ENCODE measurements at regions of chr10 and their contacts with region 1.

Region 1: GRCh38 chr10:17257466-17258321 is 29.7 kb downstream of the VIM start:
- DNase-seq: peak in 2 of 5 donors; percentile 49 to 50
- ATAC-seq: peak; percentile 73 to 87 (median 84)
- H3K4me3 ChIP-seq: peak overlapping the region in 5 of 12 donors; percentile 16 to 42 (median 24)
- H3K27ac ChIP-seq: peak overlapping the region in 1 of 12 donors; percentile 30
- H3K4me1 ChIP-seq: peaks cover 0 to 9% (median 0%) of the 10 kb centered on the region in 12 donors
- H3K27me3 ChIP-seq: no peaks in the 10 kb centered on the region
- CTCF ChIP-seq: peak; percentile 77 to 91 (median 85)
- POLR2A ChIP-seq: no peak

Region 2: GRCh38 chr10:16828114-16828568 is 429.6 kb before region 1 on chr10:
- intact Hi-C with region 1: loop called in 4 of 10 experiments (anchors 1 to 5 kb)
- DNase-seq: peak in 4 of 5 donors; percentile 46 to 55 (median 53)
- ATAC-seq: peak; percentile 74 to 82 (median 80)
- H3K4me3 ChIP-seq: peak overlapping the region in 5 of 12 donors; percentile 1 to 38 (median 17)
- H3K27ac ChIP-seq: peak overlapping the region in 10 of 12 donors; percentile 25 to 75 (median 49)
- H3K4me1 ChIP-seq: peaks cover 0 to 29% (median 13%) of the 10 kb centered on the region in 12 donors
- H3K27me3 ChIP-seq: no peaks in the 10 kb centered on the region
- CTCF ChIP-seq: peak; percentile 51 to 74 (median 64)
- POLR2A ChIP-seq: no peak

Region 3: DNA sequence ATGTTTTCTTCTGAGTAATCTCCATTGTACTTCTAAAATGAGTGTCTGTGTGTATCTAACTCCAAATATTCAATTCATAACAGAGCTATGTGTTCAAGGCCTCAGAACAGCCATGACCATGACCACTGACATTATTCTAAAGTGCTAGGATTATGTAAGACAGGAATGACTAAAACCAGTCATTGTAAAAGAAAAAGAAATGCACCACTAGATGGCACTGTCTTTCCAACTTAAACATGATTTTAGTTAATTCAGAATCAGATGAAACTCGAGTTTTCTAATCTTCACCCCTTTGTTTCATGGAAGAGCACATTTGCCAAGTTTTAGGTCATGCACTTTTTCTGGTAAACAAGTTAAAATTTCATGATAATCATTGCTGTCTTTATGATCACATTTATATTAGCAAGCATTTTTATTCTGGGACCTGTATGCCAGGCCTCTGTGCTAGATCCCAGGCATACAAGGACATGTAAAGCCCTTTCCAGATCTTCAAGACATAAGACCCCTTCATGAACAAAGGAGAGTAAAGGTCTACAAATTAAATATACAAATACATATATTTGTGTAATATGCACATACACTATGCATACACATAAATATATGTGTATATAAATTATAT is 414.3 kb before region 1 on chr10:
- intact Hi-C with region 1: loop called (anchors 1 to 5 kb)
- DNase-seq: peak in 1 of 5 donors; percentile 19
- ATAC-seq: peak; percentile 45 to 61 (median 52)
- H3K4me3 ChIP-seq: no peak overlapping the region
- H3K27ac ChIP-seq: no peak overlapping the region
- H3K4me1 ChIP-seq: peaks cover 0 to 12% (median 0%) of the 10 kb centered on the region in 12 donors
- H3K27me3 ChIP-seq: no peaks in the 10 kb centered on the region
- CTCF ChIP-seq: peak; percentile 58 to 79 (median 68)
- POLR2A ChIP-seq: no peak

Region 4: DNA sequence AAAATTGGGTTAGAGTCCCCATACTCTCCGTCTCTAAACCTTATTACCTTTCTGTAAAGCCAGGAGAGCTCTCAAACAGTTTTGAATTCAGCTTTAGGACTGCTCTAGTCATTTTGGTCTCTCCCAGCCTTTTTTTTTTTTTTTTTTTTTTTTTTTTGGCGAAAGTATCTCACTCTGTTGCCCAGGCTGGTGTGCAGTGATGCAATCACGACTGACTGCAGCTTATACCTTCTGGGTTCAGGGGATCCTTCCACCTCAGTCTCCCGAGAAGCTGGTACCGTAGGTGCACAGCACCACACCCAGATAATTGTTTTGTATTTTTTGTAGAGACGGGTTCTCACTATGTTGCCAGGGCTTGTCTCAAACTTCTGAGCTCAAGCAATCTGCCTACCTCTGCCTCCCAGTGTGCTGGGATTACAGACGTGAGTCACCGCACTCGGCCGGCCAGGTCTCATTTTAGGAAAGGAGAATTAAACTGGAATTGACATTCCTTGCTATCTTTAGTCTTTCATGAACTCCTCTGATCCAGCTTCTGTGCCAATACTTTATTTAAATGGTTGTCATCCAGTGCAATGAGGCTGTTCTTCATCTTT is 409.0 kb before region 1 on chr10:
- intact Hi-C with region 1: loop called in 9 of 10 experiments (anchors 1 to 5 kb)
- DNase-seq: no peak
- ATAC-seq: no peak
- H3K4me3 ChIP-seq: no peak overlapping the region
- H3K27ac ChIP-seq: no peak overlapping the region
- H3K4me1 ChIP-seq: peaks cover 0 to 12% (median 0%) of the 10 kb centered on the region in 12 donors
- H3K27me3 ChIP-seq: no peaks in the 10 kb centered on the region
- CTCF ChIP-seq: no peak
- POLR2A ChIP-seq: no peak

Region 5: DNA sequence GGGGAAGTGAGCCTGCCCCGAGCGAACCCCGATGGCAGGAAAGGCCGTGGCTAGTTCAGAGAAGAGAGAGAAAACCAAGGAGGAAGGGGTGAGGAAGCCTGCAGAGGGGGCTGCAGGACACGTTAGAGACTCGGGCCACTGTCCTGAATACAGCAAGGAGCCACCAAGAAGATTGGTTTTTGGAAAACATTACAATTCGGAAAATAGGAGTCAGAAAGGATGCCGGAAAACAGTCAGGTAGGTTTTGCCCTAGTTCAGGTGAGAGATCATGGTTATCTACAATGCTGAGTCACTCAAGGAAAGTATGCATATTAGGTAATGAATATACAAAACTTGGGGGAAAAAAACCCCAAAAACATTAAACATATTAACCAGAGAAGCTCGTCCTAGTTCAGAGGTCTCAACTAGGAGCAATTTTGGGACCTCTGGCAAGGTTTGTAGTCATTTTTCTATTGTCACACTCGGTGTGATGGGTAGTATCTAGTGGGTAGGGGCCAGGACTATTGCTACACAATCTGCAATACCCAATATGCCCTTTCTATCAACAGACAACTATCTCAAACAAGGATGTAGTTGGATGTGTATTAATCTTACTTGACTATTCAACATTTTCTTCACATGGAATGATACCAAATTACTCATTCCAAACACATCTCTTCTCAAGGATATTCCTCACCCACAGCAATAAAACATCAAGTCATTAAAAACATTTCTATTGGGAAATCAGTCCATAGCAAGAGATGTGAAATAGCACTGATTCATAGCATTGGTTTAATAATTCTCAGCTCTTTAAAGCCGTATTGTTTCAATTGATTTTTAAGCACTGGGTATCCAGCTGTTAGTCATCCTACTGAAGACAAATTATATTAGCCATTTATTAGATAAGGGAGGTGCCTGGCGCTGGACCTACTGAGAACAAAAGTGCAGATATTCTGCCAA is 366.1 kb before region 1 on chr10:
- intact Hi-C with region 1: loop called in 5 of 10 experiments (anchors 1 to 5 kb)
- DNase-seq: peak; percentile 53 to 71 (median 66)
- ATAC-seq: peak; percentile 58 to 95 (median 88)
- H3K4me3 ChIP-seq: no peak overlapping the region
- H3K27ac ChIP-seq: peak overlapping the region in 4 of 12 donors; percentile 9 to 40 (median 22)
- H3K4me1 ChIP-seq: peaks cover 0 to 11% (median 0%) of the 10 kb centered on the region in 12 donors
- H3K27me3 ChIP-seq: no peaks in the 10 kb centered on the region
- CTCF ChIP-seq: peak; percentile 35 to 78 (median 62)
- POLR2A ChIP-seq: no peak

Measured in heart left ventricle (tissue), 16 donors.